Activated T-helper 1 cell treated with anti-CD3 and anti-CD28 coated beads, Interleukin-12 subunit alpha, Interleukin-12 subunit beta, Interleukin-2, Interleukin-4 antibody, amounts not matched to agents 30 ng/mL and 10 ng/mL and 1 ng/mL, durations not matched to agents 14 hours and 24 hours and 36 hours (primary cell): ENCODE measurements at regions of chr1 and their contacts with region 1.

Region 1: GRCh38 chr1:209565759-209566678 is 17.5 kb upstream of the CAMK1G start:
- DNase-seq: peak; percentile 66
- H3K4me3 Mint-ChIP-seq: no peak overlapping the region
- H3K27ac Mint-ChIP-seq: no peak overlapping the region
- H3K4me1 Mint-ChIP-seq: peaks cover 27% of the 10 kb centered on the region
- H3K27me3 Mint-ChIP-seq: peaks cover 41% of the 10 kb centered on the region

Region 2: DNA sequence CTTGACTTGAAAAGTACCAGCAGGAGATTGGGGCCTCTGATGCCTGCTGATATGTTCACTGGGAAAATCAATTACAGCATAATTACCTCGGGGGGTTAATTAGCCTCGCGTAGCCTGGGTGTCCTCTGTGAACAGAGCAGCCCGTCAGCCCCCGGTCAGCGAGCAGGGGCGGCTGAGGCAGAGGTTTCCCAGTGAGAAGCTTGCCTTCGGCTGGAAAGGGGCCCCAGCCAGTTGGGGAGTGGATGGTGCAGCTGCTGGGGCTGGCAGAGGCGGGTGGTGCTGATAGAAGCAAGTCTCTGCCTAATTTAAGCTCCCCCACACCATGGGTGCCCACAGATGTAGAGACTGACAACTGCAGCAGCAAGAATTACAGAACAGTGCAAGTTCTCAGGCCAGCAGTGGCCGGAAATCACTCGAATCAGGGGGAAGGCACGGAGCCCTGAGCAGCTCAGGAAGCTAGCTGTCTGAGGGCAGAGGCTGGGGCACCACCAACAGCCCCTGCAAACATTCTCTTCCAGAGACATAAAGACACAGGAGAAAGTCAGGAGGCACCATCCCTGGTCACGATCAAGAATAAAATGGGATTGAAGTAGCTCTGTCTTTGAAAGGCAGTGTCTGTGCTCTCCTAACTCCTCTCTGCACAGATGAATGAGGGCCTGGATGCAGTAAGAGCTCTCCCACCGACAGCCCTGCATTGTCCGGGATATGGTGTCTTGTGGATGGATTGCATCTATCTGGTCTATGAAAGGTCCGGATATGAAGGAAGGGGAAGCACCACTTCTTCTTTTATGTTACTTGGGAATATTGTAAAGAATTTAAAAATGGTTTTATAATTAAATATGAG is 1488.6 kb before region 1 on chr1:
- intact Hi-C with region 1: no loop called
- DNase-seq: no peak
- H3K4me3 Mint-ChIP-seq: no peak overlapping the region
- H3K27ac Mint-ChIP-seq: no peak overlapping the region
- H3K4me1 Mint-ChIP-seq: no peaks in the 10 kb centered on the region
- H3K27me3 Mint-ChIP-seq: peaks cover 5% of the 10 kb centered on the region

Region 3: GRCh38 chr1:209202830-209203439 is 363.1 kb before region 1 on chr1:
- intact Hi-C with region 1: loop called (anchors 1 kb)
- DNase-seq: no peak
- H3K4me3 Mint-ChIP-seq: no peak overlapping the region
- H3K27ac Mint-ChIP-seq: no peak overlapping the region
- H3K4me1 Mint-ChIP-seq: no peaks in the 10 kb centered on the region
- H3K27me3 Mint-ChIP-seq: peaks cover 21% of the 10 kb centered on the region

Region 4: DNA sequence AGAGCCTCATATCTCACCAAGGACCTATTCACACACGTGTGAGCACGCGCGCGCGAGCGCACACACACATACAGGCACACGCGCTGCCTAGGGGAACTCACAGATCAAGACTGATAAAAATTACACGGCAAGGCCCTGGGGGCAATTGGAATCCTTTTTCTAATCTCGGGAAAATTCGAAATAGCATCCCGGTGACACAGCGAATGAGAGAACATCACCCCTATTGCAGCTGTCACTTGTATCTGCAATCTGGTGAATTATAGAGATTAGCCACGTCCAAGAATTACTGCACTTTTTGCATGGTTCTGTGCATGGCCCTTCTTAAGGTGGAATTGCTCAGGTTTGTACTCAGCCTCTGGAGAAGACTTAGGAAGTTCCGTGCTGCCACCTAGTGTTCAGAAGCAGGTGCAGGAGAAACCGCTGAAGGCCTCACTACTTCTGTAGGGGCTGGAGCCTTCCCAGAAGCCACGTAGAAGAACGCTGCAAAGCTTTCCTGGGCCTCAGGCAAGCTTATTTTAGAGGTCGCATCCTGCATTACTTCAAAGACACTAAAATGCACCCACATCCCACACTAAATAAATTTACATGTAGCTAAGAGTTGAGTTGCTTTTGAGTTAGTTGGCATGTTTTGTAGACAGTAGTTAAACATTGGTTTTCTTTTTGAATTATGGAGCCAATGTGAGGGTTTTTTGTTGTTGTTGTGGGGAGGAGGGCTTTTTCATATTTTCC is 211.7 kb before region 1 on chr1:
- intact Hi-C with region 1: loop called (anchors 2 kb)
- DNase-seq: peak; percentile 14
- H3K4me3 Mint-ChIP-seq: no peak overlapping the region
- H3K27ac Mint-ChIP-seq: no peak overlapping the region
- H3K4me1 Mint-ChIP-seq: no peaks in the 10 kb centered on the region
- H3K27me3 Mint-ChIP-seq: peaks cover 9% of the 10 kb centered on the region

Region 5: DNA sequence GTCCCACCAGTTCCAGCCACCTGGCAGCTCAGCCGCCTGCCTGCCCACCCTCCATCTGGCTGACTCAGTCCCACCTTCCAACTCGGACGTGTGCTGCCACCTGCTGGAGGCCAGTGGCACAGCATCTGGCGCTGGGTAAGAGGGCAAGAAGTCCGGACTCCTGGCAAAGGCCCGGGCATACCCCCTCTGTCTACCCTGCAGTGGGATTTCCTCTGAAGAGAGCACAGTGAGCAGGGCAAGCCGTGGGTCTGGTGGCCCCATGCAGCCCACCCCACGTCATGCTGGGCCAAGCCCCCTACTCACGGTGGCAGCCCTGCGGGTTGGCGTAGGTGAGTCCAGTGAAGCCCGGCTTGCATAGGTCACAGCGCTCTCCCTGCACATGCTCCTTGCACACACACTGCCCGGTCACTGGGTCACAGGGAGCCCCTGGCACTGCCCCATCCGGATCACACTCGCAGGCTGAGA is 61.7 kb after region 1 on chr1:
- intact Hi-C with region 1: loop called (anchors 1 kb)
- DNase-seq: peak; percentile 67
- H3K4me3 Mint-ChIP-seq: no peak overlapping the region
- H3K27ac Mint-ChIP-seq: no peak overlapping the region
- H3K4me1 Mint-ChIP-seq: peaks cover 16% of the 10 kb centered on the region
- H3K27me3 Mint-ChIP-seq: no peaks in the 10 kb centered on the region

Region 6: DNA sequence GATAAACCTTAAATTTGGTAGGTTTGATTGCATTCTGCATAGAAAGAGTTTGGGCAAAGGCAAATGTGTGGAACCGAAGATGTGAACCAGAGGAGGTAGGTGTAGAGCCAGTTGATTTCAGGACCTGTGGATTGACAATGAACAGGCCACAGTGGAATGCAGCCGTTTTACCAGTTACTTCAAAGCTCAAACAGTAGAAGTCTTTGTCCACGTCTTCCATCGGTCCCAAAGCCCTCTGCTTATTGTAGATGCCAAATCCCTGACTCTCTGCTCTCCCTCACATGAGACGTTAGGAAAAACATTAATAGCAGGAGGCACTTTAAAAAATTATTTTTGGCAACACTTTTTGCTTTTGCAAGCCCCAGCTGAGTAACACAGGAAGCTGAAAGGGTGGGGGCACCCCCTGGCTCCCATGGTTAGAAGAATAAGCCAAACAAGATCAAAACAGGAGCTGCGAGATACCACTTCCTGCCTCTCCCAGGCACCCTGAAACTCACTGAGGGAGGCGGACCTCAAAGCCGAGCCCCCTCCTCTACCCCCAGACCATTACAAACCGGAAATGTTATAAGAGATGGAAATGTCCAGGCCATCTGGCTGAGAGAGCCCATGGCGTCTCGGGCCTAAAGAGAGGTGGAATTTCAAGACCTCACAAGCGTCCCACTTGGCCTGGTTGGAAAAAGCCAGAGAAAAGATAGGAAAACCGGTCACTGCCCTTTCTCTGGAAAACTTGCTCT is 203.3 kb after region 1 on chr1:
- intact Hi-C with region 1: loop called (anchors 1 kb)
- DNase-seq: peak; percentile 75
- H3K4me3 Mint-ChIP-seq: no peak overlapping the region
- H3K27ac Mint-ChIP-seq: no peak overlapping the region
- H3K4me1 Mint-ChIP-seq: peaks cover 39% of the 10 kb centered on the region
- H3K27me3 Mint-ChIP-seq: no peaks in the 10 kb centered on the region

Region 7: DNA sequence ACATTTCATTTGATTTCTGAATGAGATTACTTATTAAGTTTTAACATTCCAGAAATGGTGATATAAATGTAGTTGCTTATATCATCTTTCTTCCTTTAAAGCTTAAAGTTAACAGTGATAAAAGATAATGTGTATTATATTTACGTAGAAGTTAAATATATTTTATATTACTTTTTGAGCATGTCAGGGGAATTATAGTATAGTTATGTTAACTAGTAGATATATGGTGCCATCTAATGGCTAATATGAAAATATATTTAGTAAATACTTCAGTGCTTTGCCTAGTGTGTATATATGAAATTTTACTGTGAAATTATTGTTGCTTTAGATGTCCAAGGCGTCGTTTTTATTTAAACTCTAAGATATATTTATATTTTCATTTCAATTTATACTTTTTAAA is 423.5 kb after region 1 on chr1:
- intact Hi-C with region 1: loop called (anchors 5 kb)
- DNase-seq: no peak
- H3K4me3 Mint-ChIP-seq: no peak overlapping the region
- H3K27ac Mint-ChIP-seq: no peak overlapping the region
- H3K4me1 Mint-ChIP-seq: no peaks in the 10 kb centered on the region
- H3K27me3 Mint-ChIP-seq: peaks cover 3% of the 10 kb centered on the region